ENCODE measurements at regions of chr17 and their contacts with region 1.

Region 1: GRCh38 chr17:76515274-76515949 is 14.2 kb upstream of the RHBDF2 start:
- DNase-seq: peak; percentile 64
- H3K4me3 ChIP-seq: peak overlapping the region; percentile 12
- CTCF ChIP-seq: no peak

Region 2: DNA sequence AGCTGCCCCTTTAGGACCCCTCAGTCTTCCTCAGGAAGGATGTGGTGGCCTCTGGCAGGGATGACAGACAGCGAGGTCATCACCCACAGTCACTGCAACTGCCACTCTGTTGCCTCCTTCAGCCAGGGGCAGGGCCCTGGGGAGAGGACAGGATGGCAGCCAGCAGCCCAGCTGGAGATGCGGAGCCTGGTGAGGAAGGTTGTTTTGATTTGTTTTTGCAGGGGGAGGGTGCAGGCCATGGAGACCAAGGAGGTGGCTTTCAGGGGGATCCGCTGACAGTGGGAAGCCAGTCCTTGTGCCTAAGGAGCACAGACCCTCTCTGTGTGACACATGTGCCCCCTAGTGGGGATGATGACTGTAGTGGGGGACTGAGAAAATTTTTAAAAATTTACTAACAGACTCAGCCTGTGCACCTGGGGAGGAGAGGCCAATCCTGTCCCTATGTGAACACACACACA is 31.8 kb after region 1 on chr17:
- CTCF ChIA-PET with region 1: interaction called, 180 read pairs
- POLR2A ChIA-PET with region 1: no interaction called
- DNase-seq: no peak
- H3K4me3 ChIP-seq: no peak overlapping the region
- CTCF ChIP-seq: peak; percentile 68

Region 3: GRCh38 chr17:76585818-76586593 is 70.6 kb after region 1 on chr17 and contains the start of gene ST6GALNAC2:
- CTCF ChIA-PET with region 1: no interaction called
- POLR2A ChIA-PET with region 1: no interaction called
- DNase-seq: no peak
- H3K4me3 ChIP-seq: peak within 1 kb of the TSS; percentile 48
- CTCF ChIP-seq: peak; percentile 17